ENCODE measurements at regions of chr10 and their contacts with region 1.

Region 1: DNA sequence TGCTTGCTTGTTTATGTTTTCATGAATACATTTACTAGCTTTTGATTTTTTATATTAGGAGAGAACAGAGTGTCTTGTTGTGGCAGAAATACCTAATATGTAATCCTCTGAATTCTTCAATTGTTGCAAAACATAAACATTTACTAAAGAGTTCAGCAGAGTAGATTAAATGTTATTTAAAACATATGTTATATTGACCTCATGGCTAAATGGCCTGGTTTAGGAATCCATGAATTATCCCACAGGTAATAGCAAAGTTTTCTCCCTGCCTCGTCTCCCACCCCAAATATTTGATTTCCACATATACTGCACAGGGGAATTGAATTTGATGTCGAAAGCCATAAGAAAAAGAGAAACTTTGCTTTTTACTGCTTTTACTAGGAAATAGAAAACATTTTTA is 111.8 kb downstream of the ADK start:
- DNase-seq: no peak
- ATAC-seq: no peak
- H3K4me3 ChIP-seq: no peak overlapping the region
- H3K27ac ChIP-seq: no peak overlapping the region
- H3K4me1 ChIP-seq: peaks cover 0 to 5% (median 0%) of the 10 kb centered on the region in 9 donors
- H3K27me3 ChIP-seq: no peaks in the 10 kb centered on the region
- CTCF ChIP-seq: no peak

Region 2: DNA sequence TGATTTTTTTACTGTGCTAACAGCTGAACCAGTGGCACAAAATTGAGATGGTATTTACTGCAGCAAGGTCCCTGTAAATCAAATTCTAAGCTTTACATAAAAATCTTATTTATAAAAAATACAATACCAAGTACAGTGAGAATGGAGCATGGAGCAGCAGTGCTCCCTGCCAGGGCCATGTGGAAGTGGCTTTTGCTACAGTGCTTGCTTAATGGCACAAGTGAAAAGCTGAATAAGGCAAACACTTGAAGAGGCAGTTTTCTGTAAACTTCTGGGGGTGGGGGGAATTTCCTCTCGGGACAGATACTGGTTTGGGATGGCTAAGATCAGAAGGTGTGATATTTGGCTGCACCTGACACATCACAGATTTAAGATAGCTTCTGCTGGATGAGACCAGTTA is 139.8 kb before region 1 on chr10:
- intact Hi-C with region 1: no loop called
- DNase-seq: no peak
- ATAC-seq: no peak
- H3K4me3 ChIP-seq: no peak overlapping the region
- H3K27ac ChIP-seq: no peak overlapping the region
- H3K4me1 ChIP-seq: peaks cover 0 to 28% (median 10%) of the 10 kb centered on the region in 9 donors
- H3K27me3 ChIP-seq: no peaks in the 10 kb centered on the region
- CTCF ChIP-seq: no peak

Region 3: DNA sequence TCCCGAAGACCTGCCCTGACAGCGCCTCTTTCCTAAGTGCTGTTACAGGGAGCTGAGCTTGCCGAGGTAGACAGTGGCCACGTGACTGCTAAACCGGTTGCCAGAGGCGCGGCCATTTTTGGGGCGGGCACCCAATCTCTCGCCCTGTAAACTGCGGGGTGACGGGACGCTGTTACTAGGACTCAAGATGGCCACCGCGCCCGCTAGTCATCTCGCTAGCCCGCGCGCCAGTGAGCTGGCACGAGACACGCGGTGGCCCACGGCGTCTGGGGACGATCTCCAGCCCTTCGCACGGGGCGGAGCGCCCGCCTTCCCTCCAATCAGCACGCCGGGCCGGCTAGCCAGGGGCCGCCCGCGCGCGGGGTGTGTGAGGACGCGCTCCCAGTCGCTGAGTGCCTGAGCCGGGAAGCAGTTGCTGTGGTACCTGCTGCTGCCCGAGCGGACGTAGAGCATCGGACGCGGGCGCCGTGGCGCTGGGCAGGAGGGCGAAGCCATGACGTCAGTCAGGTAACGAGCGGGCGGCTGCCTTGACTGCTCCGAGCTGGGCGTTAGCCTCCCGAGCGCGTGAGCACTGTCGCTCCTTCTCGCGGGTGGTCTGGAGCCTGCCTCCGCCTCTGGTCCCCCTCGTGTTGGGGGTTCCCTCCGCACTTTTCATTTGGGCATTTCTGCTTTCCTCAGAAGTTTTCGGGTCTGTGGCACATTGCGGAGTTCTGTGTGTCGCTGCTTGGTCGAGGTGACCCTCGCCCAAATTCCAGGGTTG is 86.3 kb before region 1 on chr10:
- intact Hi-C with region 1: no loop called
- DNase-seq: peak; percentile 92
- ATAC-seq: peak; percentile 97 to 99 (median 98)
- H3K4me3 ChIP-seq: peak overlapping the region; percentile 52 to 92 (median 80)
- H3K27ac ChIP-seq: peak overlapping the region; percentile 26 to 90 (median 86)
- H3K4me1 ChIP-seq: peaks cover 0 to 29% (median 16%) of the 10 kb centered on the region in 9 donors
- H3K27me3 ChIP-seq: no peaks in the 10 kb centered on the region
- CTCF ChIP-seq: peak in 1 of 9 donors; percentile 7

Region 4: GRCh38 chr10:74194545-74194944 is 68.3 kb before region 1 on chr10:
- intact Hi-C with region 1: no loop called
- DNase-seq: no peak
- ATAC-seq: no peak
- H3K4me3 ChIP-seq: no peak overlapping the region
- H3K27ac ChIP-seq: no peak overlapping the region
- H3K4me1 ChIP-seq: peaks cover 0 to 26% (median 11%) of the 10 kb centered on the region in 9 donors
- H3K27me3 ChIP-seq: no peaks in the 10 kb centered on the region
- CTCF ChIP-seq: no peak

Region 5: GRCh38 chr10:74917481-74918077 is 654.7 kb after region 1 on chr10:
- intact Hi-C with region 1: loop called in 1 of 10 experiments (anchors 5 kb)
- DNase-seq: no peak
- ATAC-seq: peak in 3 of 8 donors; percentile 40 to 62 (median 54)
- H3K4me3 ChIP-seq: no peak overlapping the region
- H3K27ac ChIP-seq: peak overlapping the region in 2 of 10 donors; percentile 10 to 29
- H3K4me1 ChIP-seq: peaks cover 0 to 44% (median 36%) of the 10 kb centered on the region in 9 donors
- H3K27me3 ChIP-seq: no peaks in the 10 kb centered on the region
- CTCF ChIP-seq: no peak

Region 6: GRCh38 chr10:75019370-75019769 is 756.5 kb after region 1 on chr10:
- intact Hi-C with region 1: loop called in 6 of 10 experiments (anchors 2 to 10 kb)
- DNase-seq: no peak
- ATAC-seq: peak in 1 of 8 donors; percentile 41
- H3K4me3 ChIP-seq: no peak overlapping the region
- H3K27ac ChIP-seq: no peak overlapping the region
- H3K4me1 ChIP-seq: peaks cover 0 to 26% (median 15%) of the 10 kb centered on the region in 9 donors
- H3K27me3 ChIP-seq: no peaks in the 10 kb centered on the region
- CTCF ChIP-seq: peak in 6 of 9 donors; percentile 29 to 53 (median 46)

Region 7: DNA sequence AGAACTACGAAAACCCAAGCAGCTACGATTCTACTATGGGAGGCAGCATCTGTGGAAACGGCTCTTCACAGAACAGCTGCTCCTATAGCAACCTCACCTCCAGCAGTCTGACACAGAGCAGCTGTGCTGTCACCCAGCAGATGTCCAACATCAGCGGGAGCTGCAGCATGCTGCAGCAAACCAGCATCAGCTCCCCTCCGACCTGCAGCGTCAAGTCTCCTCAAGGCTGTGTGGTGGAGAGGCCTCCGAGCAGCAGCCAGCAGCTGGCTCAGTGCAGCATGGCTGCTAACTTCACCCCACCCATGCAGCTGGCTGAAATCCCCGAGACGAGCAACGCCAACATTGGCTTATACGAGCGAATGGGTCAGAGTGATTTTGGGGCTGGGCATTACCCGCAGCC is 767.0 kb after region 1 on chr10:
- intact Hi-C with region 1: loop called in 2 of 10 experiments (anchors 10 kb)
- DNase-seq: peak in 1 of 2 donors; percentile 33
- ATAC-seq: peak; percentile 27 to 72 (median 38)
- H3K4me3 ChIP-seq: no peak overlapping the region
- H3K27ac ChIP-seq: no peak overlapping the region
- H3K4me1 ChIP-seq: peaks cover 0 to 17% (median 8%) of the 10 kb centered on the region in 9 donors
- H3K27me3 ChIP-seq: no peaks in the 10 kb centered on the region
- CTCF ChIP-seq: no peak

Region 8: DNA sequence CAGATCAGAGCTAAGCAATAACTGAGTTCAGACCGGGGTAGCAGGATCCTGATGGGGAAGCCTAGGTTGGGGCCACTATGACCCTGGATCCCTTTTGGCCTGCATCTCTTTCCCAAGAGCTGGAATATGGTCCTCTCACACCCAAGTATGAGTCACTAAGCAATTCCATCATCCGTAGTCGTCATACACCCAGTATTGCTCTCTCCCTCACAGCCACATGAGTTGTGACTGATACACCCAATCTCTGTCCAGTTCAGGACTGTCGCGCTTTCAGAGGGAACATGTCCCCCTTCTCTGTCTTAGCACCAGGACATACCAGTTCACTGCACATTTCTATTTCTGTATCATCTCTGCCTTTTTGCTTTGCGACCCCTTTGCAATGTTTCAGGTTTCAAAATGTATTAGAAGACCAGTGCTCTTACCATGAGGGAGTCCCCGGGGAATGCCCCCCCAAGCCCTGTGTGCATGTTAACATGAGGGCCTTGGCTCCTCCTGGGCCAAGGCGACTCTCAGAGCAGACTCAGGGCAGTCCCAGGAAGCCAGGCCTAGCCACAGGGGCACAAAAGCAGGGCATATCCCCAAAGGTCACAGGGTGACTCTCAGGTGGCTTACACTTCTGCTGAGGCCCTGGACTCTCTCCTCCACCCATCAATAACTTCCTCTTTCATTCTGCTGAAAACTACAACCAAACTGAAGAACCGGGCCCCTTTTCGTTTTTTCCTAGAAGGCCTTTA is 773.3 kb after region 1 on chr10:
- intact Hi-C with region 1: loop called in 1 of 10 experiments (anchors 10 kb)
- DNase-seq: no peak
- ATAC-seq: peak in 1 of 8 donors; percentile 15
- H3K4me3 ChIP-seq: no peak overlapping the region
- H3K27ac ChIP-seq: no peak overlapping the region
- H3K4me1 ChIP-seq: peaks cover 0 to 39% (median 17%) of the 10 kb centered on the region in 9 donors
- H3K27me3 ChIP-seq: no peaks in the 10 kb centered on the region
- CTCF ChIP-seq: no peak